Activated CD4-positive, alpha-beta memory T cell treated with anti-CD3 and anti-CD28 coated beads, Interleukin-2, amount 10 ng/mL, durations not matched to agents 7 days and 5 days (primary cell): ENCODE measurements at regions of chr22 and their contacts with region 1.

Region 1: DNA sequence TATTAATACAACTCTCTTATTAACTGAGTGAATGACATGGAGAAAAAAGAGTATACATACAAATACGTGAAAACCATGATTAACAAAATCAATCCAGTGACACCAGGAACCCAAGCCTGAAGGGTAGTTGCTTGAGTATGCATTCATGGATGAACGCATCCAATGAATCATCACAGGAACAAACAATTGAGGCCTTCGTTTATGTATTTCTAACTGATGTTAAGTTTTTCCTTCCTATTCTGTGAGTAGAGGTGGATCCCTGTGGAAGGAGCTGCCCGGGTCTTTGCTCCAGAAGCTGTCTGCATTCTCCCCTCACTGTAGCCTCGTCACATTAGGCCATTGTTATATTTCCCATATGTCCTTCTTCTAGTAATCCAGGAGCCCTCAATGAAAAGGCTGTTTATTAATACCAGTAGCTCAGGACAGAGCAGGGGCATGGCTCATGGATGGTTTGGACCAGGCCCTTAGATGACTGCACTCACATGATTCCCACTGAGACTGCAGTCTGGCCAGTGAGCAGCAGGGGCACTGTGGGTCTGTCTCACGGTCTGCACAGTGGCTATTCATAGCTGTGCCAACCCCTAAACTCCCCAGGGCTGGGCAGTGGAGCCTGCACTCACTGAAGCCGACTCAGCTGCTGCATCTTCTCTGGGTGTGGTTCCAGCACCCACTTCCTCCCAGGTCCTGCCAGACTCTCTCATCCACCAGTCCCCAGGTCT is 128.1 kb upstream of the TOP3B start:
- DNase-seq: peak; percentile 78
- H3K4me3 Mint-ChIP-seq: no peak overlapping the region
- H3K27ac Mint-ChIP-seq: peak overlapping the region; percentile 63
- H3K4me1 Mint-ChIP-seq: peaks cover 23% of the 10 kb centered on the region
- H3K27me3 Mint-ChIP-seq: no peaks in the 10 kb centered on the region

Region 2: GRCh38 chr22:22156716-22157347 is 46.1 kb after region 1 on chr22:
- CTCF ChIA-PET with region 1: interaction called, 10 read pairs
- POLR2A ChIA-PET with region 1: no interaction called
- DNase-seq: peak; percentile 68
- H3K4me3 Mint-ChIP-seq: no peak overlapping the region
- H3K27ac Mint-ChIP-seq: no peak overlapping the region
- H3K4me1 Mint-ChIP-seq: peaks cover 8% of the 10 kb centered on the region
- H3K27me3 Mint-ChIP-seq: peaks cover 6% of the 10 kb centered on the region

Region 3: GRCh38 chr22:22248878-22249277 is 138.2 kb after region 1 on chr22:
- CTCF ChIA-PET with region 1: no interaction called
- POLR2A ChIA-PET with region 1: no interaction called
- DNase-seq: peak; percentile 29
- H3K4me3 Mint-ChIP-seq: no peak overlapping the region
- H3K27ac Mint-ChIP-seq: peak overlapping the region; percentile 2
- H3K4me1 Mint-ChIP-seq: peaks cover 13% of the 10 kb centered on the region
- H3K27me3 Mint-ChIP-seq: no peaks in the 10 kb centered on the region